Activated naive CD4-positive, alpha-beta T cell treated with anti-CD3 and anti-CD28 coated beads for 36 hours (primary cell): ENCODE measurements at regions of chr9 and their contacts with region 1.

Region 1: GRCh38 chr9:15552636-15553527 is at the start of gene CCDC171:
- DNase-seq: peak; percentile 90
- H3K4me3 Mint-ChIP-seq: peak within 1 kb of the TSS; percentile 86
- H3K27ac Mint-ChIP-seq: peak within 1 kb of the TSS; percentile 78
- H3K4me1 Mint-ChIP-seq: peaks cover 5% of the 10 kb centered on the region
- H3K27me3 Mint-ChIP-seq: no peaks in the 10 kb centered on the region
- total RNA-seq, gene CCDC171: 2.0 to 2.7 TPM

Region 2: DNA sequence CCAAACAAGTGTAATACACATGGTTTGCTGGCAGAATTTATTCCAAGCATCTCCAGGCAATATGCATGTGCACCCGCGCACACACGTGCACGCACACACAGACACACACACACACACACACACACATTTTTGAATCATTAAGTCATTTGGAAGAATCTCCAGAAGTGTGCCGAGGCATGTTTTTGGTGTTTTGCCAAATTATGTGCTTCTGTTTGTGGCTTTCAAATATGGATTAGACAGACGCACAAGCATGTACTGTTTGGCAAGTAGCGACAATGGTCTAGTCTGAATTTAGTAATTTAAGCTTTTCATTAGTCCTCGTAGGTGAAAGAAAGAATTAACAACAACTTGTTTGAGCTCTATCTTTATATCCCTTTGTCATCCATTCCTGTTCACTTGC is 1275.6 kb before region 1 on chr9:
- CTCF ChIA-PET with region 1: no interaction called
- intact Hi-C with region 1: no loop called
- DNase-seq: no peak
- H3K4me3 Mint-ChIP-seq: no peak overlapping the region
- H3K27ac Mint-ChIP-seq: no peak overlapping the region
- H3K4me1 Mint-ChIP-seq: no peaks in the 10 kb centered on the region
- H3K27me3 Mint-ChIP-seq: peaks cover 18% of the 10 kb centered on the region

Region 3: DNA sequence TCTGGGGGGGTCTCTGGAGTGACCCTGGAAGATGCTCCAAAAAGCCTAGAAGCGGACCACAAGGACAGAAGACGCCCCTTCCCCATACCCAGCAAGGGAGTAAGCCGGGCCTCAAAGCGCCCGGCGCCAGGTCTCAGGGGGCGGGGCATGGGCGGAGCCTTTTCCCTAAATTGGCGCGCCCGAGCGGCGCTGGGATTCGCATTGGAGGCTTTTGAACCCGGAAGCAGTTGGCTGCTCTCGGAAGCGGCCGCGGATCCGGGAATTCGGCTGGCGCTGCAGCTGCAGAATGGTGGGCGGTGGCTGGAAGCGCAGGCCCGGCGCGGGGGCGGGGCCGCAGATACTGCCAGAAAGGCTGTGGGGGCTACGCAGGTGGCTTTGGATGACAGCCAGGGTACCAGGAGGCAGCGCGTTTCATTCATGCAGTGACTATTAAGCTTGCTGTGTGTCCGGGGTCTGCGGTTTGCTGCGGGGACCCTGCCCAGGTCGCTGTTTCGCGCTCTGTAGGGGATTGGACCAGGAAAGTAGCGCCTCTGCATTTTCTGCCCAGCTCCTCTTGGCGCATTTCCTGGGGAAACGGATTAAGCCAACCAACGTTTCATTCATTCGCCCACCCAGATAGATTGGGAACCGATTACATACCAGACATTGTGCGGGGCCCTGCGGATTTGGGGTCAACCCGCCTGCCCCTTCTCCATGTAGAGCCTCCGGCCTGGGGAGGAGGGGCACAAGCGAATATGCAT is 559.7 kb before region 1 on chr9:
- CTCF ChIA-PET with region 1: no interaction called
- intact Hi-C with region 1: loop called (anchors 2 kb)
- DNase-seq: peak; percentile 76
- H3K4me3 Mint-ChIP-seq: peak overlapping the region; percentile 76
- H3K27ac Mint-ChIP-seq: peak overlapping the region; percentile 74
- H3K4me1 Mint-ChIP-seq: peaks cover 30% of the 10 kb centered on the region
- H3K27me3 Mint-ChIP-seq: no peaks in the 10 kb centered on the region

Region 4: GRCh38 chr9:15205632-15206420 is 347.1 kb before region 1 on chr9:
- CTCF ChIA-PET with region 1: interaction called, 5 read pairs
- intact Hi-C with region 1: loop called (anchors 5 kb)
- DNase-seq: no peak
- H3K4me3 Mint-ChIP-seq: no peak overlapping the region
- H3K27ac Mint-ChIP-seq: no peak overlapping the region
- H3K4me1 Mint-ChIP-seq: peaks cover 12% of the 10 kb centered on the region
- H3K27me3 Mint-ChIP-seq: no peaks in the 10 kb centered on the region

Region 5: DNA sequence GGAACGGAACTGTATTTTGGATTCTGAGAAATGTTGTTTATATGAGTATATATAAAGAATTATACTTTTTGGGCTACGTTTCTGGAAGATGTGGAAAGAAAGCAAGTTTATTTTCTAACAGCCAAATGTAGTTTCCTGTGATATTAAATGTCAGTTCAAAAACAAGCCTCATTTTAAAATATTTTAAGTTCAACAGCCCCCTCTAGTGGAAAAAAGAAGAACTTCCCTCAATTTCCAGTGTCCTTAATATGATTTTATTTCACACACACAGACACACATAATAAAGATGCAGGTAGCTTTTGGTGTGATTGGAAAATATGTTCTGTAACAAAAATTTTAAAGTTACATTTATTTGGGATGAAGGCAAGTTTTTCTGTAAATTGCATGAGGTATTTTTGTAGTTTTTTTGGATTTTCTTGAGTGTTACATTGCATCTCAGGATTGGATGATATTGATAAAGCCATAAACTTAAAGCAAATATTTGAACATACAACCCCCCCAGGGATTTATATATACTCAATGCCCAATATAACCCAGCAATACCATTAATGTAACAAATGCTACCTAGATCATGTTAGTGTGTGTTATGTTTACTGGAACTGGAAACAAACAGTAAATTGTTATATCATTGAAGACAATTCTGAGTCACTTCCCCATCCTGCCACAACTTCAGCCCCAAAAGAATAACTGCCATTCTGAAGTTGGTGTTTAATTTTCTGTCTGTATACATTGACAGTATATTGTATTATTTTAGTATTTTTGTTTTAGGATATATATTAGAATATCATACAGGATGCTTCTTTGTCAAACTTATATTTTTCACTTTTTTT is 54.0 kb after region 1 on chr9:
- CTCF ChIA-PET with region 1: interaction called, 12 read pairs
- intact Hi-C with region 1: loop called (anchors 1 kb)
- DNase-seq: no peak
- H3K4me3 Mint-ChIP-seq: no peak overlapping the region
- H3K27ac Mint-ChIP-seq: no peak overlapping the region
- H3K4me1 Mint-ChIP-seq: no peaks in the 10 kb centered on the region
- H3K27me3 Mint-ChIP-seq: no peaks in the 10 kb centered on the region

Region 6: DNA sequence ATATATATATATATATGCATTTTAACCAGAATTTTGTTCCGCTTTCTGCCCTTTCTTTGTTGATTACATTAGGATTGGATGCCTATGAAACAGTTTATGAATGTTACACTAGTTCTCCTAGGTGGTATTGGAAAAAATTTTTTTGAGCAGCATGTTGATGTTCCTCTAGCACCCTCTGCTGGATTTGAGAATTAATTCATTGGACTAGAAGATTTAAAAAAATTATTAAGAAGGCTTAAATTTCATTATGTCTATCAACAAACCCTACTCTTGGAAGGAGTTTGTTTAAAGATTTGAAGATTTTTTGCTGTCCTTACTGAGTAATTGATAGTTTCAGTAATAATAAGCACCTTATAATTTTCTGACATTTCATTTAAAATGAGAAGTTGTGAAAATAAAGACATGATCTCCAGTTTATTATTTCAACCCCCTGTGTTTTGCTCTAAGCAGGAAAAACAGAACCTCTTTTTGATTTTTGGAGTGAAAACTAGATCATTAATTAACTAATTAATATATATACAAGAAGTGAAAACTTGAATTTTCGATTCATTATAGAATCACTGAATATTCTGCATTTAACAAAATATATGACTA is 89.6 kb after region 1 on chr9:
- CTCF ChIA-PET with region 1: no interaction called
- intact Hi-C with region 1: loop called (anchors 1 kb)
- DNase-seq: no peak
- H3K4me3 Mint-ChIP-seq: no peak overlapping the region
- H3K27ac Mint-ChIP-seq: no peak overlapping the region
- H3K4me1 Mint-ChIP-seq: no peaks in the 10 kb centered on the region
- H3K27me3 Mint-ChIP-seq: no peaks in the 10 kb centered on the region